ENCODE measurements at regions of chr3 and their contacts with region 1.

Region 1: DNA sequence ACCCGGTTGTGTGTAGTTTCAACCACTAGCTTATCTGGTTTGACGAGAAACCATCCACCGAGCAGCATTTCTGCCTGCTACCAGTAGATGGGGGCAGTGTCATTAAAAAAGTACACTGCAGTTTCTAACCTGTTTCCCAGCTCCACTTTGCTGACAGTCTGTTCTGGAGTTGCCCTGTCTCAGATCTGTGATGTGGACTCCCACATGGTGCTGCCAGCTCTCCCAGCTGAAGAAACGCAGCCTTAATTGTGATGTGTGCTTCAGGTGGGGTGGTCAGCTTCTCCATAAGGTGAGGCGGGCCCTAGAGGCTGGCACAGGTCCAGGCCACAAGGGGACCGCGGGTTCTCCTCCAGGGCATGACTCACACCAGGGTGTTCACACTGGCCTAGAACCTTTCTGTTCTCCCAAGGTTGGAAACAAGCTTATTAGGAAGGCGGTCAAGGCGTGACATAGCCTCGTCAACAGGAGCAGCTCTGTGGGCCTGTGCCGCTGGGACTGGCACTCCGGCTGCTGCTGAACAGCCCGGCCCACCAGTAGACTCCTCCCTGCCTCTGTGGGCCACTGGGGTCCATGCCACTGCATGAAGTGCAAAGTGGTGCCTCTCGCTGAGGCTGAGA is 2.9 kb upstream of the FAM43A start:
- DNase-seq: peak; percentile 87
- ATAC-seq: peak; percentile 37
- H3K4me3 ChIP-seq: no peak overlapping the region
- H3K4me3 Mint-ChIP-seq: peak overlapping the region; percentile 23
- H3K27ac ChIP-seq: no peak overlapping the region
- H3K27ac Mint-ChIP-seq: peak overlapping the region; percentile 26
- H3K4me1 ChIP-seq: peaks cover 15 to 29% of the 10 kb centered on the region in 2 donors
- H3K4me1 Mint-ChIP-seq: peaks cover 43% of the 10 kb centered on the region
- H3K27me3 ChIP-seq: no peaks in the 10 kb centered on the region
- H3K27me3 Mint-ChIP-seq: no peaks in the 10 kb centered on the region
- CTCF ChIP-seq: peak; percentile 90

Region 2: GRCh38 chr3:192906949-192907348 is 1775.9 kb before region 1 on chr3:
- CTCF ChIA-PET with region 1: no interaction called
- POLR2A ChIA-PET with region 1: no interaction called
- intact Hi-C with region 1: no loop called
- DNase-seq: no peak
- ATAC-seq: no peak
- H3K4me3 ChIP-seq: no peak overlapping the region
- H3K4me3 Mint-ChIP-seq: no peak overlapping the region
- H3K27ac ChIP-seq: no peak overlapping the region
- H3K27ac Mint-ChIP-seq: no peak overlapping the region
- H3K4me1 ChIP-seq: no peaks in the 10 kb centered on the region
- H3K4me1 Mint-ChIP-seq: no peaks in the 10 kb centered on the region
- H3K27me3 ChIP-seq: no peaks in the 10 kb centered on the region
- H3K27me3 Mint-ChIP-seq: peaks cover 16% of the 10 kb centered on the region
- CTCF ChIP-seq: no peak

Region 3: GRCh38 chr3:194540274-194540905 is 142.4 kb before region 1 on chr3:
- CTCF ChIA-PET with region 1: no interaction called
- POLR2A ChIA-PET with region 1: no interaction called
- intact Hi-C with region 1: no loop called
- DNase-seq: no peak
- ATAC-seq: no peak
- H3K4me3 ChIP-seq: no peak overlapping the region
- H3K4me3 Mint-ChIP-seq: no peak overlapping the region
- H3K27ac ChIP-seq: no peak overlapping the region
- H3K27ac Mint-ChIP-seq: no peak overlapping the region
- H3K4me1 ChIP-seq: peaks cover 0 to 3% of the 10 kb centered on the region in 2 donors
- H3K4me1 Mint-ChIP-seq: peaks cover 4% of the 10 kb centered on the region
- H3K27me3 ChIP-seq: no peaks in the 10 kb centered on the region
- H3K27me3 Mint-ChIP-seq: peaks cover 3% of the 10 kb centered on the region
- CTCF ChIP-seq: no peak

Region 4: GRCh38 chr3:194769020-194769643 is 86.3 kb after region 1 on chr3:
- CTCF ChIA-PET with region 1: interaction called, 16 read pairs
- POLR2A ChIA-PET with region 1: interaction called, 24 read pairs
- intact Hi-C with region 1: loop called (anchors 1 kb)
- DNase-seq: peak; percentile 97
- ATAC-seq: peak; percentile 97
- H3K4me3 ChIP-seq: peak overlapping the region; percentile 40 to 75 (median 55)
- H3K4me3 Mint-ChIP-seq: peak overlapping the region; percentile 85
- H3K27ac ChIP-seq: peak overlapping the region; percentile 52 to 77
- H3K27ac Mint-ChIP-seq: peak overlapping the region; percentile 83
- H3K4me1 ChIP-seq: peaks cover 19 to 29% of the 10 kb centered on the region in 2 donors
- H3K4me1 Mint-ChIP-seq: peaks cover 29% of the 10 kb centered on the region
- H3K27me3 ChIP-seq: peaks cover 0 to 2% (median 0%) of the 10 kb centered on the region in 4 experiments
- H3K27me3 Mint-ChIP-seq: peaks cover 14% of the 10 kb centered on the region
- CTCF ChIP-seq: no peak

Region 5: GRCh38 chr3:194976049-194976451 is 293.2 kb after region 1 on chr3:
- CTCF ChIA-PET with region 1: interaction called, 21 read pairs
- POLR2A ChIA-PET with region 1: interaction called, 13 read pairs
- intact Hi-C with region 1: no loop called
- DNase-seq: no peak
- ATAC-seq: no peak
- H3K4me3 ChIP-seq: no peak overlapping the region
- H3K4me3 Mint-ChIP-seq: peak overlapping the region; percentile 48
- H3K27ac ChIP-seq: no peak overlapping the region
- H3K27ac Mint-ChIP-seq: peak overlapping the region; percentile 85
- H3K4me1 ChIP-seq: peaks cover 14 to 23% of the 10 kb centered on the region in 2 donors
- H3K4me1 Mint-ChIP-seq: peaks cover 26% of the 10 kb centered on the region
- H3K27me3 ChIP-seq: no peaks in the 10 kb centered on the region
- H3K27me3 Mint-ChIP-seq: no peaks in the 10 kb centered on the region
- CTCF ChIP-seq: no peak

Region 6: DNA sequence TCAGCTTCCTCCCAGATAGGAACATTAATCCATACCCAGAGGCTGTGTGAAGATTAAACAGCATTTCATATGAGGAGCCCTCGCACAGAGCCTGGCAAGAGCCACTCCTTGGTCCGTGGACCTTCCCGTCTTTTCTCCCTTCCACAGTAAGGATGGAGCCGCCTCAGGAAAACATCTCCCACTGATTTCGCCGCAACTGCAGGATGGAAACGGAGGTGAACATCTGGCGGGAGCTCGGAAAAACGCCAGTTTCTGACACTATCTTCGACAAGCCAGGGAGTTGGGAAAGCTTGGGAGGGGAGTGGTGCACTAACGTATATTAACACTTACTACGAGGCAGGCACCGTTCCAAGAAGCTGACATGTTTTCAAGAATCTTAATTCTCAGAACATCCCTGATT is 430.2 kb after region 1 on chr3:
- CTCF ChIA-PET with region 1: interaction called, 163 read pairs
- POLR2A ChIA-PET with region 1: no interaction called
- intact Hi-C with region 1: no loop called
- DNase-seq: no peak
- ATAC-seq: no peak
- H3K4me3 ChIP-seq: no peak overlapping the region
- H3K4me3 Mint-ChIP-seq: no peak overlapping the region
- H3K27ac ChIP-seq: no peak overlapping the region
- H3K27ac Mint-ChIP-seq: peak overlapping the region; percentile 17
- H3K4me1 ChIP-seq: peaks cover 0 to 5% of the 10 kb centered on the region in 2 donors
- H3K4me1 Mint-ChIP-seq: peaks cover 4% of the 10 kb centered on the region
- H3K27me3 ChIP-seq: no peaks in the 10 kb centered on the region
- H3K27me3 Mint-ChIP-seq: no peaks in the 10 kb centered on the region
- CTCF ChIP-seq: no peak

Region 7: DNA sequence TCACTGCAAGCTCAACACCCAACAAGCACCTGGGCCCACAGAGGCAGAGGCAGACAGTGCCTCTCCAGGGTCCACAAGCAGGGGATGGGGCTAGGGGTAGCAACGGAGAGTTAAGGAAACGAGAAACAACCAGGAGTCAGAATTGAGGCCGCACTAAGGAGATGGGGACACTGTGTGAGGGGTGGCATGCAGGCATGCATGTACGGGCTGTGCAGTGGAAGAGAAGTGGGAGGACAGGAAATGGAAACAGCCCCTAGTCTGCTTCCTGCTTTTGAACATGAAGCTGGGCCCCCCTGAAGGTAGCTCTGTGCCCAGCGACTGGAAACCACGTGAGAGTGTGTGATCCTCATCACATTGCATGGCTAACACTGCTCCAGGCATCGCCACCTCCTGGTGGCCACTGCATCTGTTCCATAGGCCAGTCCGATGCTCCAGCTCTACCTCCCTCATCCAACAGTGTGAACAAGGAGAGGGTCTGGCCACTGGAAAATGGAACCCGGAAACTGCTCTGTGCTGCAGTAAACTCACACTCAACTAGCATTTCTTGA is 544.2 kb after region 1 on chr3:
- CTCF ChIA-PET with region 1: interaction called, 12 read pairs
- POLR2A ChIA-PET with region 1: no interaction called
- intact Hi-C with region 1: no loop called
- DNase-seq: no peak
- ATAC-seq: peak; percentile 36
- H3K4me3 ChIP-seq: no peak overlapping the region
- H3K4me3 Mint-ChIP-seq: no peak overlapping the region
- H3K27ac ChIP-seq: no peak overlapping the region
- H3K27ac Mint-ChIP-seq: no peak overlapping the region
- H3K4me1 ChIP-seq: peaks cover 0 to 11% of the 10 kb centered on the region in 2 donors
- H3K4me1 Mint-ChIP-seq: peaks cover 19% of the 10 kb centered on the region
- H3K27me3 ChIP-seq: no peaks in the 10 kb centered on the region
- H3K27me3 Mint-ChIP-seq: no peaks in the 10 kb centered on the region
- CTCF ChIP-seq: no peak

Region 8: GRCh38 chr3:195542698-195543499 is 860.1 kb after region 1 on chr3 and contains the start of gene PPP1R2:
- CTCF ChIA-PET with region 1: interaction called, 3 read pairs
- POLR2A ChIA-PET with region 1: interaction called, 5 read pairs
- intact Hi-C with region 1: loop called (anchors 5 kb)
- DNase-seq: peak; percentile 95
- ATAC-seq: peak; percentile 90
- H3K4me3 ChIP-seq: peak within 1 kb of the TSS; percentile 75 to 95 (median 93)
- H3K4me3 Mint-ChIP-seq: peak within 1 kb of the TSS; percentile 97
- H3K27ac ChIP-seq: peak within 1 kb of the TSS; percentile 96 to 98
- H3K27ac Mint-ChIP-seq: peak within 1 kb of the TSS; percentile 96
- H3K4me1 ChIP-seq: peaks cover 58 to 65% of the 10 kb centered on the region in 2 donors
- H3K4me1 Mint-ChIP-seq: peaks cover 77% of the 10 kb centered on the region
- H3K27me3 ChIP-seq: no peaks in the 10 kb centered on the region
- H3K27me3 Mint-ChIP-seq: no peaks in the 10 kb centered on the region
- CTCF ChIP-seq: no peak
- total RNA-seq, gene PPP1R2: 73.8 and 81.8 TPM in 2 replicates

Measured in B cell (primary cell).